ENCODE measurements at regions of chr11 and their contacts with region 1.

Region 1: DNA sequence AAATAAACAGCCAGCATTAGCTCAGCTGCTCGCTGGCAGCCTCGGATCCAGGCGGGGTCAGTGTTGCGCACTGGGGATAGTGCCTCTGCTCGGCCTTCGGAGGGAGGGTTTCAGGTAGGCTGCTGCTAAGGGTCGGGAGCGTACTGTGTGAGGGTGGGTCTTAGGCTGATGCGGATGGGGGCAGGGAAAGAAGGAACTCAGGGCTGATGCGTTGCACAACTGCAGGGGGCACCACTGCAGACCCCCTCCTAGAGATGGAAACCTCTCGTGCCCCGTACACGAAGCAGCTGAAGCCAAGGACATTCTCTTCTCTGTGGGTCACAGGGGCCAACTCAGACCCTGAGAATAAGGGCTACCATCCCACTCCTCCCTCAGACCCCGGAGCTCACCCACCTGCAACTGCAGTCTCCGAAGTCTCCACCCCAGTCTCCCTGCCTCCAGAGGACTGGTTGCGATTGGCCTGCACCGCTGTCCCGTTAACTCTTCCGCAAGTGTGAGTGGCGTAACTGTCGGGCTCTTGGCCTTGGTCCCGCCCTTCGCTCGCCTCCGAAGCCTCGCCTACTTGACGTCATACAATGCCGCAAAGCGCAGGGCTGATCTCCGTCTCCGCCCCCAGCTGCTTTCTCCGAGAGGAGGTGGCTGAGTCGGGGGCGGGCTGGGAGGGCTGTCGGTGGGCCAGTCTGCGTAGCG is at the start of gene KBTBD3:
- DNase-seq: peak; percentile 99 to 100
- H3K4me3 ChIP-seq: peak within 1 kb of the TSS; percentile 84 to 85
- H3K27ac ChIP-seq: peak within 1 kb of the TSS; percentile 95 to 96
- H3K4me1 ChIP-seq: peaks cover 0 to 43% (median 16%) of the 10 kb centered on the region in 4 donors
- H3K27me3 ChIP-seq: no peaks in the 10 kb centered on the region
- CTCF ChIP-seq: peak; percentile 9 to 22

Region 2: GRCh38 chr11:106021967-106022794 is 54.9 kb before region 1 on chr11 and contains the start of gene MSANTD4:
- intact Hi-C with region 1: loop called (anchors 5 kb)
- DNase-seq: peak; percentile 100
- H3K4me3 ChIP-seq: peak within 1 kb of the TSS; percentile 69 to 87
- H3K27ac ChIP-seq: peak within 1 kb of the TSS; percentile 70 to 81
- H3K4me1 ChIP-seq: peaks cover 0 to 35% (median 19%) of the 10 kb centered on the region in 4 donors
- H3K27me3 ChIP-seq: no peaks in the 10 kb centered on the region
- CTCF ChIP-seq: peak in 1 of 2 experiments; percentile 18

Region 3: GRCh38 chr11:106202935-106203620 is 126.0 kb after region 1 on chr11:
- intact Hi-C with region 1: no loop called
- DNase-seq: no peak
- H3K4me3 ChIP-seq: no peak overlapping the region
- H3K27ac ChIP-seq: no peak overlapping the region
- H3K4me1 ChIP-seq: no peaks in the 10 kb centered on the region
- H3K27me3 ChIP-seq: no peaks in the 10 kb centered on the region
- CTCF ChIP-seq: no peak

Measured in tibial artery (tissue), 4 donors.